OCI-LY7 (cell line): ENCODE measurements at regions of chr13 and their contacts with region 1.

Region 1: GRCh38 chr13:40477623-40478608 is 188.5 kb downstream of the FOXO1 start:
- DNase-seq: peak; percentile 54
- H3K4me3 ChIP-seq: peak overlapping the region; percentile 67
- H3K27ac ChIP-seq: peak overlapping the region; percentile 96
- H3K4me1 ChIP-seq: peaks cover 83% of the 10 kb centered on the region
- CTCF ChIP-seq: no peak

Region 2: GRCh38 chr13:40362502-40362901 is 115.4 kb before region 1 on chr13:
- CTCF ChIA-PET with region 1: no interaction called
- POLR2A ChIA-PET with region 1: no interaction called
- intact Hi-C with region 1: no loop called
- DNase-seq: no peak
- H3K4me3 ChIP-seq: no peak overlapping the region
- H3K27ac ChIP-seq: no peak overlapping the region
- H3K4me1 ChIP-seq: peaks cover 13% of the 10 kb centered on the region
- CTCF ChIP-seq: no peak

Region 3: GRCh38 chr13:40457929-40458719 is 19.8 kb before region 1 on chr13:
- CTCF ChIA-PET with region 1: interaction called, 3 read pairs
- POLR2A ChIA-PET with region 1: interaction called, 11 read pairs
- intact Hi-C with region 1: no loop called
- DNase-seq: no peak
- H3K4me3 ChIP-seq: no peak overlapping the region
- H3K27ac ChIP-seq: no peak overlapping the region
- H3K4me1 ChIP-seq: peaks cover 33% of the 10 kb centered on the region
- CTCF ChIP-seq: no peak

Region 4: DNA sequence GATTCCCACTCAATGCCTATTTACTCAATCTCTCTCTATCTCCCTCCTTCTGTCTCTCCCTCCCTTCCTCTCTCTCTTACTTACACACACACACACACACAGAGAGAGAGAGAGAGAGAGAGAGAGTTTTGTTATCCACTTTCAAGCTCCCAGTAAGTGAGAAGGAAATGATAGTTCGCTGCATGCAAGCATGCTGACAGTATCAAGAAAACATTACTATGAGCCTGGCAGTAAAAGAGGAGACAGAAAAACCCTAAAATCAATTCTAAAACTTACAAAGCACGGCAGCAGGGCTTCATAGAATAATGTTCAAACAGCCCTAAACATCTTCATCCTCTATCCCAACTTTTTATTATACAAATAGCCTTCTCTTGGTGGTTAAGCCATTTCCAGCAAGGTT is 16.6 kb after region 1 on chr13:
- CTCF ChIA-PET with region 1: interaction called, 10 read pairs
- POLR2A ChIA-PET with region 1: interaction called, 10 read pairs
- intact Hi-C with region 1: no loop called
- DNase-seq: peak; percentile 35
- H3K4me3 ChIP-seq: no peak overlapping the region
- H3K27ac ChIP-seq: no peak overlapping the region
- H3K4me1 ChIP-seq: peaks cover 46% of the 10 kb centered on the region
- CTCF ChIP-seq: no peak

Region 5: GRCh38 chr13:40505196-40505595 is 27.3 kb after region 1 on chr13:
- CTCF ChIA-PET with region 1: no interaction called
- POLR2A ChIA-PET with region 1: no interaction called
- intact Hi-C with region 1: no loop called
- DNase-seq: no peak
- H3K4me3 ChIP-seq: no peak overlapping the region
- H3K27ac ChIP-seq: no peak overlapping the region
- H3K4me1 ChIP-seq: no peaks in the 10 kb centered on the region
- CTCF ChIP-seq: no peak